ENCODE measurements at regions of chr3 and their contacts with region 1.

Region 1: GRCh38 chr3:180989291-180990163 is at the start of gene DNAJC19:
- DNase-seq: peak; percentile 69 to 94 (median 93)
- ATAC-seq: peak; percentile 99
- H3K4me3 ChIP-seq: peak within 1 kb of the TSS; percentile 78
- H3K4me3 Mint-ChIP-seq: peak within 1 kb of the TSS; percentile 91 to 99 (median 97)
- H3K27ac ChIP-seq: peak within 1 kb of the TSS; percentile 80
- H3K27ac Mint-ChIP-seq: peak within 1 kb of the TSS; percentile 90 to 99 (median 96)
- H3K4me1 ChIP-seq: peaks cover 15 to 23% of the 10 kb centered on the region in 2 donors
- H3K4me1 Mint-ChIP-seq: peaks cover 15 to 58% (median 44%) of the 10 kb centered on the region in 7 donors
- H3K27me3 ChIP-seq: no peaks in the 10 kb centered on the region
- H3K27me3 Mint-ChIP-seq: peaks cover 0 to 7% (median 0%) of the 10 kb centered on the region in 5 donors
- total RNA-seq, gene DNAJC19: 20.7 to 74.1 (median 40.2) TPM

Region 2: DNA sequence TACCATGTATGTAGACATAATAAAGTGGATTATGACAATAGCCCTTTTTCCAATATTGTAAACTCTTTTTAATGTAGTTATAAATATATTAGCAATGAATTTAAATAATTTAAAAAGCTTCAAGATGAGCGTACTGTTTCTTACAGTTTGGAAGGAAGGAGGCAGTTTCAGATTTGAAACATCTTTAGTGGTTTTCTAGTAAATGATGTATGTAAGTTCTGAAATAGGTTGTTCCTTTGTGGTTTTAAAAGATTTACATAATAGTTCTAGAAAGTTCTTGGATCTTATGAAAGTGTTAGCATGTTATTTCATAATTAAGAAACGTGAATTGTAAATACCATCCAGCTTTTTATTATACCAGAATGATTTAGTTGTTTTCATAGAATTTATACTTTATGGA is 16.0 kb before region 1 on chr3:
- CTCF ChIA-PET with region 1: no interaction called
- POLR2A ChIA-PET with region 1: interaction called, 5 read pairs
- intact Hi-C with region 1: loop called in 1 of 2 experiments (anchors 2 kb)
- DNase-seq: no peak
- ATAC-seq: no peak
- H3K4me3 ChIP-seq: no peak overlapping the region
- H3K4me3 Mint-ChIP-seq: no peak overlapping the region
- H3K27ac ChIP-seq: no peak overlapping the region
- H3K27ac Mint-ChIP-seq: peak overlapping the region in 1 of 9 donors; percentile 78
- H3K4me1 ChIP-seq: no peaks in the 10 kb centered on the region
- H3K4me1 Mint-ChIP-seq: peaks cover 0 to 10% (median 3%) of the 10 kb centered on the region in 7 donors
- H3K27me3 ChIP-seq: no peaks in the 10 kb centered on the region
- H3K27me3 Mint-ChIP-seq: no peaks in the 10 kb centered on the region

Measured in naive thymus-derived CD4-positive, alpha-beta T cell (primary cell).